Activated T-helper 1 cell treated with anti-CD3 and anti-CD28 coated beads, Interleukin-12 subunit alpha, Interleukin-12 subunit beta, Interleukin-2, Interleukin-4 antibody, amounts not matched to agents 30 ng/mL and 10 ng/mL and 1 ng/mL, durations not matched to agents 14 hours and 24 hours and 36 hours (primary cell): ENCODE measurements at regions of chr11 and their contacts with region 1.

Region 1: DNA sequence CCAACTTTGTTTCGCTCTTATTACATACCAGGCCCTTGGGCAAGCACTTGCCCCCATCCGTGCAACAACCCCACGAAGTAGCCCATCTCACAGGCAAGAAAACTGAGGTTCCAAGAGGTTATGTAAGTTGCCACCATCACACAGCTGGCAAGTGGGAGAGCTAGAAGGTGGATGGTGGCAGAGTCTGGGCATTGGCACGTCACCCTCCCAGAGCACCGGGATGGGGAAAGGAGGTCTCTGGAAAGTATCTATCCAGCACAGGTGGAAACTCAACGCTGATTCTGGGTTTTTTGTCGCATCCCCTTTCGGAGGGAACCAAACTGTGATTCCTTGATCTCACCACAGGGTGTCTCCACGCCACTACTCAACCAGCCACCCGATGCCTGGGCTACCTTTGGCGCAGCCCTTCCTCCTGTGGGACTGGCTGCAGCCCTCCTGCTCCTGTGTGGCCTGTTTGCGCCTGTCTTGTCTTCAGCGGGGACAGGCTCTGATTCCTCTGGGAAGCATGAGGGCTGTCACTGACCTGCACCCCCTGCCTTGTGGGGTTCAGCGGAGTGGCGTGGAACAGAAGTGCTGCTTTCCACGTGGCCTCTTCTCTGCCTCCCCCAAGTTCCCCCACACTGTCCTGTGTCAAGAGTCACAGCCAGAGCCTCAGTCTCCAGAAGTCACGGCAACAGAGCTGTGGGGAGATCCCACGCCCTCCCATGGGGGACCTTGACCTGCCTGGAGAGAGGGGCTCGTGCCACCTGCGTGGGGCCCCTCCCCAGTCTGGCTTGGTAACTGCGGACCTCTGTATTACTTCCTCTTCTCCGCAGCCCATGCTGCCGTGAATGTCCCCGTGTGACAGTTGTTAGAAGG is 34.4 kb upstream of the TRIM29 start:
- DNase-seq: peak; percentile 34
- H3K4me3 Mint-ChIP-seq: no peak overlapping the region
- H3K27ac Mint-ChIP-seq: no peak overlapping the region
- H3K4me1 Mint-ChIP-seq: peaks cover 8% of the 10 kb centered on the region
- H3K27me3 Mint-ChIP-seq: peaks cover 63% of the 10 kb centered on the region

Region 2: DNA sequence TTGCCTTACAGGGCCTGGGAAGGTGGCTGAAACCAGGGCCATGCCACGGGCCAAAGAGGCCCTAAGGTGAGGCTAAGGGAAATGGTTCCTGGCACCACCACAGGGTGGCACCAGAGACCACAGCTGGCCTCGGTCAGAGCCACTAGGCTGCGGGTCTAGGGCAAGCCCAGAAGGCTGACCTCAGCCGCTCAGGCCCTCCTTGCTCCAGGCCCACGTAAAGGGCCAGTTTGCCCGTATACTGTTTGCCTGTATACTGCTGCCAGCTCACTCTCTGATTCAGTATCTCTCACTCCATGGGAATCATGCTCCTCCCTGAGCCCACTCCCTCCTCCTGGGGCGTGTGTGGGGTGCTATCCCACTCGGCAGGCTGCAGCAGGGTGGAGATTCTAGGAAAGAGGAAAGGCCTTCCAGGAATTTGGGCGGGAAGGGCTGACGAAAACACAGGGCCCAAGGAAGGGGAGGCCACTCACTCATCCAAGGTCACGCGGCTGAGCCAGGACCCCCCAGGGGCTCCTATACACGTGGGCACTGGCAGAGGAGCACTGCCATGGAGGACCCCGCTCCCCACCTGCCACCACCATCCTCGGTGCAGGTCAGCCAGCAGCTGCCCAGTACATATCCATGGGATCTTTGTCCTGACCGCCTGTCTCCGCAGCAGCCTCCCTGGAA is 505.7 kb before region 1 on chr11:
- intact Hi-C with region 1: loop called (anchors 1 kb)
- DNase-seq: peak; percentile 38
- H3K4me3 Mint-ChIP-seq: no peak overlapping the region
- H3K27ac Mint-ChIP-seq: no peak overlapping the region
- H3K4me1 Mint-ChIP-seq: no peaks in the 10 kb centered on the region
- H3K27me3 Mint-ChIP-seq: no peaks in the 10 kb centered on the region

Region 3: DNA sequence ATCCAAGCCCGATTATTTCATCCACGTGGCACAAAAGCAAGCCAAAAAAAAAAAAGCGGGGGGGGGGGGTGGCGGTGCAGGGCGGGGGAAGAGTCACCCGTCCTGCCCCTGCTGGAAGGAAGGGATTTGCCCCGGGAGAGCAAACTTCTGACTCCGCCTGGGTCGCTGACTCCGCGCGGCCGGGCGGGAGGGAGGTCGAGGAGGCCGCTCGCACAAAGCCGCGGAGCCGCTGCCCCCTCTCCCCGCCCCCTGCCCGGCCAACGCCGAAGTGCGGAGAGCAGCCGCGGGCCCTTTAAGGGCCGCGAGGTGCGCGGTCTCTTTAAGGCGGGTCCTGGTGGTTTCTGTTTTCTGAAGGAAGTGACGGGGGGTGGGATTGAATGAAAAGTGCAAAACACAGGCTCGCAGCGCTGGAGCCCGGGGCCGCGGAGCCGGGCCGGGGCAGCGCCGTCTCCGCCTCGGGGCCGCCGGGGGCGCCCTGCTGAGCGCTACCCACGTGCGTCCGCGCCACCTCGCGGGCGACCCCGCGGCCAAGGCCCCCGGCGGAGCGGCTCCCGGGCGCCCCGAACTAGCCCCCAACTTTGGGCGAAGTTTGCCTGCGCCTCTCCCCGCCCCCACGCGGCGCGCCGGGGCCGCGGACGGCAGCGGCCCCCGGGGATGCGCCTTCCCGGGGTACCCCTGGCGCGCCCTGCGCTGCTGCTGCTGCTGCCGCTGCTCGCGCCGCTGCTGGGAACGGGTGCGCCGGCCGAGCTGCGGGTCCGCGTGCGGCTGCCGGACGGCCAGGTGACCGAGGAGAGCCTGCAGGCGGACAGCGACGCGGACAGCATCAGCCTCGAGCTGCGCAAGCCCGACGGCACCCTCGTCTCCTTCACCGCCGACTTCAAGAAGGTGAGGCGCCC is 38.6 kb after region 1 on chr11 and contains the start of gene OAF:
- intact Hi-C with region 1: loop called (anchors 2 kb)
- DNase-seq: peak; percentile 67
- H3K4me3 Mint-ChIP-seq: peak within 1 kb of the TSS; percentile 92
- H3K27ac Mint-ChIP-seq: peak within 1 kb of the TSS; percentile 76
- H3K4me1 Mint-ChIP-seq: peaks cover 13% of the 10 kb centered on the region
- H3K27me3 Mint-ChIP-seq: peaks cover 54% of the 10 kb centered on the region
- total RNA-seq, gene OAF: 6.7 and 7.3 TPM in 2 replicates

Region 4: GRCh38 chr11:120229451-120230424 is 57.5 kb after region 1 on chr11:
- intact Hi-C with region 1: loop called (anchors 1 kb)
- DNase-seq: no peak
- H3K4me3 Mint-ChIP-seq: no peak overlapping the region
- H3K27ac Mint-ChIP-seq: no peak overlapping the region
- H3K4me1 Mint-ChIP-seq: no peaks in the 10 kb centered on the region
- H3K27me3 Mint-ChIP-seq: peaks cover 18% of the 10 kb centered on the region

Region 5: DNA sequence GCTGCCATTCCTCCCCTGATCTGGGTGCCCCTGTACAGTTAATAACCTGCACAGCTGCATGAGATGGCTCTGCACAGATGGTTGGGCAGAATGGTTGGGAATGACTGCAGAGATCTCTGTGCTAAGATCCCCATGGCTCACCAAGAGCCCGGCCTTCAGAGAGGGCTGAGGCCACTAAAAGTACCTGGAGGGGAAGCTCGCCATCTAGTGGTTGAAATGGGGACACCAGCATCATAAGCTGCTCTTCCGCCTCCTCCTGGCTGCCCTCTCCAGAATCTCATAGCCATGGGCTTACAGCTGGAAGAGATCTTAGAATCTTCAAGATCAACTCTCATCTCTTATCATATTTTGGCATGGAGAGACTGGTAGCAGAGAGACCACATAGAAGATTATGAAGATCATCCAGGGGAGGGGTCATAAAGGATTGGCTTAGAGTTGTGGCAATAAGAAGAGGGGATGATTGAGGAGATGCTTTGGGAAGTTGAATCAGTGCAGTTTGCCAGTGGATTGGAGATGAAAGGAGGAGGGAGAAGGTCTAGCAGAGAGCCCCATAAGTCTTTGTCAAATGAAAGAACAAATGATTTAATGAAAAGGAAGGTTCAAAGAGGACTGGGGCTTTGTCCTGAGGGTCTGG is 130.8 kb after region 1 on chr11:
- intact Hi-C with region 1: loop called (anchors 1 kb)
- DNase-seq: peak; percentile 46
- H3K4me3 Mint-ChIP-seq: no peak overlapping the region
- H3K27ac Mint-ChIP-seq: peak overlapping the region; percentile 7
- H3K4me1 Mint-ChIP-seq: no peaks in the 10 kb centered on the region
- H3K27me3 Mint-ChIP-seq: peaks cover 26% of the 10 kb centered on the region

Region 6: DNA sequence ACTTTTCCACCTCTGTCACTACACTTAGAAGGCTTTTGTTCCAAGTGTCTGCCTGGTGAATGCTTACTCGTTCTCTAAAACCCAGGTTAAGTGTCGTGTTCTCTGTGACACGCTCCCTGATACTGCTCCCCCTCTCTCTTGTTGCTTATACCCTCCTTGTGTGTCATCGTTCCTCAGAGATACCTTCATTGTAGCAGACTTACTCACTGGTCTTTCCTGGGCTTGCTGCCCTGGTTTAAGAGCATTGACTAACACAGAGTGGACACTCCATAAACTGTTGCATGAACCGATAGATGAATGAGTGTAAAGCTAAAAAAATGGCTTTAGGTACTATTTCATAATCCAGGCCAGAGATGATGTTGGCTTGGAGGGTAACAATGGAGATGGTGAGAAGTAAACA is 510.6 kb after region 1 on chr11:
- intact Hi-C with region 1: loop called (anchors 10 kb)
- DNase-seq: no peak
- H3K4me3 Mint-ChIP-seq: no peak overlapping the region
- H3K27ac Mint-ChIP-seq: no peak overlapping the region
- H3K4me1 Mint-ChIP-seq: no peaks in the 10 kb centered on the region
- H3K27me3 Mint-ChIP-seq: peaks cover 6% of the 10 kb centered on the region